A549 (cell line): ENCODE measurements at regions of chr6 and their contacts with region 1.

Region 1: GRCh38 chr6:28758046-28758817 is 165.6 kb downstream of the TRIM27 start:
- DNase-seq: peak; percentile 25 to 88
- ATAC-seq: peak; percentile 87 to 92
- H3K4me3 ChIP-seq: peak overlapping the region; percentile 60
- H3K27ac ChIP-seq: peak overlapping the region; percentile 86 to 89
- H3K4me1 ChIP-seq: peaks cover 11% of the 10 kb centered on the region; the same call in 1 of the 3 replicates
- CTCF ChIP-seq: no peak
- EP300 ChIP-seq: no peak
- POLR2A ChIP-seq: no peak
- RAD21 ChIP-seq: peak in 1 of 2 experiments; percentile 22; a peak in 1 of 5 replicates

Region 2: GRCh38 chr6:28597217-28598005 is 160.8 kb before region 1 on chr6:
- CTCF ChIA-PET with region 1: no interaction called
- POLR2A ChIA-PET with region 1: no interaction called
- DNase-seq: peak; percentile 46 to 86
- ATAC-seq: peak; percentile 89 to 96
- H3K4me3 ChIP-seq: peak overlapping the region; percentile 61
- H3K27ac ChIP-seq: peak overlapping the region; percentile 77 to 88
- H3K4me1 ChIP-seq: no peaks in the 10 kb centered on the region
- CTCF ChIP-seq: no peak
- EP300 ChIP-seq: no peak
- POLR2A ChIP-seq: no peak
- RAD21 ChIP-seq: no peak; a peak in 1 of 5 replicates

Region 3: DNA sequence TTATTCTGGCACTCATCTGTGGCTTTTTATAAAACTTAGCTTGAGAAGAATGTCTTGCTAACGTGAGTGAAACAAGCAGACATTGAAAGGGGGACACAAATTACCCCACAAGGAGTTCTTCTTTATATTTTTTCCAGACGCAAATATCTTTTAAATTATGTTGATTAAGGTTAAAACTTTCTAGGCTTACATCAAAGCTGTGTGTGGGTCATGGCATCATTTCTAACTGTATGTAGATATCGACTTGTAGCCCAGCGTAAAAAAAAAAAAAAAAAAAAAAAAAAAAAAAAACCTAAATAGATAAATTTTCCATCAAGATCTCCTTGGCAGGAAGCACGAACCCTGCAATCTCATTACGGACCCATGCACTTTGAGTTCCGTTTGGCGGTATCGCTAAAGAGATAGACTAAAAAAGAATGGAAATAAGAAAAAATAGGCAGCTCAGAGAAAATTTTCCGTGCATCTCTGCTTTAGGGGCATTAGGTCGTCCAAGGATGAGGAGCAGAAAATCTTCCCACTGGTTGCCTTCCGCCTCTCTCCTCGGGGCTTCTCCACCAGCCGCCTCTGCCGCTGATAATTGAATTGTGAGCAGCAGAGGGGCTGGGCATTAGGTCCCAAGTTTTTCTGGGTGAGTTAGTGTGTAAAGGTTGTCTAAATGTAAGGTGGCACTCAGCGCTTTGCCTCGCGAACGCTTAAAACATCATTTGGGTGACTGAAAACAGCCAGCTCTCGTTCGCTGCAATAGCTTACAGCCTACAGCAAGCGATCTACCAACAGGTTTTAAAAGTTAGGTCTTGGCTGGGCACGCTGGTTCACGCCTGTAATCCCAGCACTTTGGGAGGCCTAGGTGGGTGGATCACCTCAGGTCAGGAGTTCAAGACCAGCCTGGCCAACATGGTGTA is 28.5 kb before region 1 on chr6:
- CTCF ChIA-PET with region 1: no interaction called
- POLR2A ChIA-PET with region 1: interaction called, 10 read pairs
- DNase-seq: peak in 1 of 2 experiments; percentile 52
- ATAC-seq: peak; percentile 27 to 41; a peak in 3 of 6 replicates
- H3K4me3 ChIP-seq: peak overlapping the region; percentile 92
- H3K27ac ChIP-seq: peak overlapping the region in 1 of 2 experiments; percentile 69; a peak in 3 of 6 replicates
- H3K4me1 ChIP-seq: peaks cover 10% of the 10 kb centered on the region
- CTCF ChIP-seq: no peak
- EP300 ChIP-seq: no peak
- POLR2A ChIP-seq: no peak
- RAD21 ChIP-seq: no peak

Region 4: DNA sequence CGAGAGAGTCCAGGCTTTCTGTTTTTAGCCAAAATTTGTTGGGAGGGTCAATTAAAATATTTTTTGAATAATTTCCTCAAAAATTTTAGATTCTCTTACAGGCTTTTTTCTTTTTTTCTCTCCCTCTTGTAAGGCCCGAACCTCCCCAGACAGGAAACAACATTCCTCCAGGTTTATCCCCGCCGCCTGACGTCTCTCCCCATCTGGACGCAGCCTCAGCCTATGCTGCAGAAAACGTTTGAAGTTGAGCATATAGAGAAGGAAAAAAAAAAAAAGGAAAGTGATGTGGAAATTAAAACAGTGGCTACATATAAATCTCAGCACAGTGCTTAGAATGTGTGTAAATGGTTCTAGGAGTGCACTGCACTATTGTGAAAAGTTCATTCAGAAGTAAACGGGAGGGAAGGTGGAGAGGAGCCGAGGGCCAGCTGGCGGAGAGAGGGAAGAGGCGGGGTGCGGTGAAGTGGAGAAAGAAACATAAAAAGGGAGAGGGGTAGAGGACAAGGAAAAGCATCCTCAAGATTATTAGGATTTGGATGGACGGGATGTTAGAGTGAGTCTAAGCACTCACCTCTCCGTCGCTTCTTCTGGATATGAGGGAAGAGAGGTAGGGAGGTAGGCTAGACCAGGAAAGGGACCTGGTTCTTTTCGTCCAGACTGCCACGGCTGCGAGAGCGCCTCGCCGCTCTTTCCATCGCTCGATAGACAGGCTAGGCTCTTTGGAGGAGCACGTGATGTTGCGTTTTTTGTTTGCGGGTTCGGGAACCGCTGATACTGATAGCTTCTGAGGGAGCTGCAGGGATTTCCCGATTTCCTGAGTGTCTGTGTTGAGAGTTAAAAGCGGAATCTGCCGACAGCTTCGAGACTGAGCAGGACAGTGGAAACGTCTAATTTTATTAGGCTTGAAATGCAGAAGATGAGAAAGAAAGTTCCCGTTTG is 66.8 kb after region 1 on chr6:
- CTCF ChIA-PET with region 1: no interaction called
- POLR2A ChIA-PET with region 1: no interaction called
- DNase-seq: no peak
- ATAC-seq: peak in 1 of 2 experiments; percentile 40; a peak in 1 of 6 replicates
- H3K4me3 ChIP-seq: 0 out of 3 replicates have a peak overlapping the region, but pooled peaks have one; percentile 5
- H3K27ac ChIP-seq: no peak overlapping the region
- H3K4me1 ChIP-seq: no peaks in the 10 kb centered on the region
- CTCF ChIP-seq: no peak
- EP300 ChIP-seq: no peak
- POLR2A ChIP-seq: no peak
- RAD21 ChIP-seq: no peak

Region 5: GRCh38 chr6:28907394-28907793 is 149.2 kb after region 1 on chr6:
- CTCF ChIA-PET with region 1: no interaction called
- POLR2A ChIA-PET with region 1: no interaction called
- DNase-seq: no peak
- ATAC-seq: no peak
- H3K4me3 ChIP-seq: no peak overlapping the region
- H3K27ac ChIP-seq: no peak overlapping the region
- H3K4me1 ChIP-seq: no peaks in the 10 kb centered on the region
- CTCF ChIP-seq: no peak
- EP300 ChIP-seq: no peak
- POLR2A ChIP-seq: no peak
- RAD21 ChIP-seq: no peak